T-cell (primary cell): ENCODE measurements at regions of chr19 and their contacts with region 1.

Region 1: DNA sequence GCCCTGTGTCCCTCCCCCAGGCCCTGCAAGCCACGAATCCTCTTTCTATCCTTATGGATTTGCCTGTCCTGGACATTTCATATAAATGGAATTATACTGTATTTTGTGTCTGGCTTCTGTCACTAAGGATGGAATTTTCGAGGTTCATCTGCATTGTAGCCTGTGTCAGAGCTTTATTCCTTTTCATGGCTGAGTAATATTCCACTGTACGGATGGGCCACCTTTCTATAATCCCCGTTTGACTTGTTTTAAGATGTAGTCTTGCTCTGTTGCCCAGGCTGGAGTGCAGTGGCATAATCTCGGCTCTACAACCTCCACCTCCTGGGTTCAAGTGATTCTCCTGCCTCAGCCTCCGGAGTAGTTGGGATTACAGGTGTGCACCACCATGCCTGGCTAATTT is 3.9 kb upstream of the KDM4B start:
- DNase-seq: no peak
- ATAC-seq: no peak
- H3K4me3 ChIP-seq: no peak overlapping the region
- H3K4me3 Mint-ChIP-seq: no peak overlapping the region
- H3K27ac ChIP-seq: no peak overlapping the region
- H3K27ac Mint-ChIP-seq: no peak overlapping the region
- H3K4me1 ChIP-seq: peaks cover 3 to 17% of the 10 kb centered on the region in 2 experiments
- H3K4me1 Mint-ChIP-seq: peaks cover 5 to 12% (median 8%) of the 10 kb centered on the region in 3 donors
- H3K27me3 ChIP-seq: no peaks in the 10 kb centered on the region
- H3K27me3 Mint-ChIP-seq: no peaks in the 10 kb centered on the region

Region 2: GRCh38 chr19:4889034-4889815 is 75.8 kb before region 1 on chr19:
- CTCF ChIA-PET with region 1: interaction called in 1 of 2 experiments, 13 read pairs
- POLR2A ChIA-PET with region 1: no interaction called
- DNase-seq: no peak
- ATAC-seq: no peak
- H3K4me3 ChIP-seq: no peak overlapping the region
- H3K4me3 Mint-ChIP-seq: no peak overlapping the region
- H3K27ac ChIP-seq: no peak overlapping the region
- H3K27ac Mint-ChIP-seq: no peak overlapping the region
- H3K4me1 ChIP-seq: no peaks in the 10 kb centered on the region
- H3K4me1 Mint-ChIP-seq: no peaks in the 10 kb centered on the region
- H3K27me3 ChIP-seq: no peaks in the 10 kb centered on the region
- H3K27me3 Mint-ChIP-seq: no peaks in the 10 kb centered on the region

Region 3: DNA sequence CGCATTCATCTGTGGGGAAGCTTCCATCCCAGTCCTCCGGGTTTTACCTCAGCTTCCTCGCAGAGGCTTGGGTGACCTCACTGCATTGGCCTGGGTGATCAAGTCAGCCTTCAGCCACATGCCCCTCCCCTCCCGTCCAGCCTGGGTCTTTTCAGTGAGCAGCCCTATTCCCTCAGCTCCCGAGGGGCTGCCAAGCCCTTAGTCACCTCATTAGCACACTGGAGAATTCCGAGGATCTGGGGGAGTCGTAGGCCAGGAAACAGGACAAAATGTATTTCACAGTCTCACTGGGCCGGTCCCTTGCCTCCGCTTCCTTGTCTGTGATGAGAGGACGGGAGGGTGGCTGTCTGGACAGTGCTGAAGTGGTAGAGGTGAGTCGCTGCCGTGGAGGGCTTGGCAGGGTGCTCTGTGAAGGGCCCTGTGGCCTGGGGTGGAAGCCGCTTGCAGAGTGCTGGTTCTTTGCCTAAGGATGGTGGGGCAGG is 23.8 kb after region 1 on chr19:
- CTCF ChIA-PET with region 1: no interaction called
- POLR2A ChIA-PET with region 1: no interaction called
- DNase-seq: no peak
- ATAC-seq: no peak
- H3K4me3 ChIP-seq: no peak overlapping the region
- H3K4me3 Mint-ChIP-seq: no peak overlapping the region
- H3K27ac ChIP-seq: no peak overlapping the region
- H3K27ac Mint-ChIP-seq: no peak overlapping the region
- H3K4me1 ChIP-seq: peaks cover 0 to 20% of the 10 kb centered on the region in 2 experiments
- H3K4me1 Mint-ChIP-seq: peaks cover 16 to 40% (median 39%) of the 10 kb centered on the region in 3 donors
- H3K27me3 ChIP-seq: no peaks in the 10 kb centered on the region
- H3K27me3 Mint-ChIP-seq: no peaks in the 10 kb centered on the region